ENCODE measurements at regions of chr4 and their contacts with region 1.

Region 1: DNA sequence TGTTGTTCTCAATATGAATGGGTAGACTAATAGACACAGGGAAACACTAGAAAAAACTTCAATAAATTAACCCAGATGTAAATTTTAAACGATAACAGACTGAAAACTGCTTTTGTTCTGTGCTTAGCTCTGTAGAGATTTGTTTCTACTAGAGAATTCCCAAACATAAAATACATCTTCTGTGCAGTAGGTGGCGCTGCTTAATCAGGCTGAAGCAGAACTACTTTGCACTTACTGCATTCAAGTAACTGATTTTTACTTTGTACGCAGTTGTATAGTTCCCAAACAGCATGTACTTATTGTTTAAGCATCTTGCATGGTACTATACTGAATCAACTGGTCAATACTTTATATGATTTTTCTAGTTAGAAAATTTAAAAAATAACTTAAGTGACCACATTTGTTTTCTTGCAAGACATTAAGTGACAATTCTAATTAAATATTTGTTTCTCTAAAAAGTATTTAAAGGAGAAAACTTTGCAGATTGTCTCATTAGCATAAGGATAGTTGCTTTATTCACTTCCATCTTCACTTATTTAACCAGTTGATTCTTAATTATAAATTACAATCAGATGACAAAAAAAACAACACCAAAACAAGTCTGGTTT is 490.6 kb downstream of the IL15 start:
- DNase-seq: peak; percentile 80
- ATAC-seq: peak; percentile 80
- H3K4me3 ChIP-seq: no peak overlapping the region
- H3K27ac ChIP-seq: no peak overlapping the region
- H3K4me1 ChIP-seq: peaks cover 5% of the 10 kb centered on the region
- H3K27me3 ChIP-seq: no peaks in the 10 kb centered on the region
- CTCF ChIP-seq: peak; percentile 85
- POLR2A ChIP-seq: no peak
- RAD21 ChIP-seq: peak; percentile 95

Region 2: GRCh38 chr4:141158219-141158618 is 968.8 kb before region 1 on chr4:
- CTCF ChIA-PET with region 1: no interaction called
- POLR2A ChIA-PET with region 1: no interaction called
- dilution Hi-C with region 1: no loop called
- in situ Hi-C with region 1: no loop called
- intact Hi-C with region 1: loop called (anchors 1 kb)
- DNase-seq: peak; percentile 55
- ATAC-seq: peak; percentile 54; the same call in 1 of the 2 replicates
- H3K4me3 ChIP-seq: no peak overlapping the region
- H3K27ac ChIP-seq: no peak overlapping the region
- H3K4me1 ChIP-seq: no peaks in the 10 kb centered on the region
- H3K27me3 ChIP-seq: 0 out of 2 replicates have a peak, but pooled peaks cover 1% of the 10 kb centered on the region
- CTCF ChIP-seq: peak; percentile 67
- POLR2A ChIP-seq: no peak
- RAD21 ChIP-seq: peak; percentile 80

Region 3: GRCh38 chr4:142615318-142615654 is 488.3 kb after region 1 on chr4:
- CTCF ChIA-PET with region 1: no interaction called
- POLR2A ChIA-PET with region 1: no interaction called
- dilution Hi-C with region 1: no loop called
- in situ Hi-C with region 1: no loop called
- intact Hi-C with region 1: loop called (anchors 5 kb)
- DNase-seq: peak; percentile 71
- ATAC-seq: peak; percentile 37; the same call in 1 of the 2 replicates
- H3K4me3 ChIP-seq: no peak overlapping the region
- H3K27ac ChIP-seq: no peak overlapping the region
- H3K4me1 ChIP-seq: no peaks in the 10 kb centered on the region; the same call in 1 of the 2 replicates
- H3K27me3 ChIP-seq: no peaks in the 10 kb centered on the region
- CTCF ChIP-seq: no peak
- POLR2A ChIP-seq: no peak
- RAD21 ChIP-seq: no peak

Region 4: GRCh38 chr4:142840516-142841123 is 713.6 kb after region 1 on chr4:
- CTCF ChIA-PET with region 1: no interaction called
- POLR2A ChIA-PET with region 1: no interaction called
- dilution Hi-C with region 1: no loop called
- in situ Hi-C with region 1: loop called (anchors 5 kb)
- intact Hi-C with region 1: loop called (anchors 1 kb)
- DNase-seq: peak; percentile 68
- ATAC-seq: no peak
- H3K4me3 ChIP-seq: no peak overlapping the region
- H3K27ac ChIP-seq: no peak overlapping the region
- H3K4me1 ChIP-seq: peaks cover 2% of the 10 kb centered on the region; the same call in 1 of the 2 replicates
- H3K27me3 ChIP-seq: no peaks in the 10 kb centered on the region
- CTCF ChIP-seq: peak; percentile 83
- POLR2A ChIP-seq: no peak
- RAD21 ChIP-seq: peak; percentile 77

Region 5: GRCh38 chr4:143085224-143085623 is 958.2 kb after region 1 on chr4:
- CTCF ChIA-PET with region 1: no interaction called
- POLR2A ChIA-PET with region 1: no interaction called
- dilution Hi-C with region 1: no loop called
- in situ Hi-C with region 1: no loop called
- intact Hi-C with region 1: loop called (anchors 2 kb)
- DNase-seq: peak; percentile 8
- ATAC-seq: peak; percentile 40; the same call in 1 of the 2 replicates
- H3K4me3 ChIP-seq: no peak overlapping the region
- H3K27ac ChIP-seq: no peak overlapping the region
- H3K4me1 ChIP-seq: no peaks in the 10 kb centered on the region
- H3K27me3 ChIP-seq: no peaks in the 10 kb centered on the region
- CTCF ChIP-seq: peak; percentile 41
- POLR2A ChIP-seq: no peak
- RAD21 ChIP-seq: peak; percentile 46

Measured in IMR-90 (cell line).